ENCODE measurements at regions of chr5 and their contacts with region 1.

Region 1: DNA sequence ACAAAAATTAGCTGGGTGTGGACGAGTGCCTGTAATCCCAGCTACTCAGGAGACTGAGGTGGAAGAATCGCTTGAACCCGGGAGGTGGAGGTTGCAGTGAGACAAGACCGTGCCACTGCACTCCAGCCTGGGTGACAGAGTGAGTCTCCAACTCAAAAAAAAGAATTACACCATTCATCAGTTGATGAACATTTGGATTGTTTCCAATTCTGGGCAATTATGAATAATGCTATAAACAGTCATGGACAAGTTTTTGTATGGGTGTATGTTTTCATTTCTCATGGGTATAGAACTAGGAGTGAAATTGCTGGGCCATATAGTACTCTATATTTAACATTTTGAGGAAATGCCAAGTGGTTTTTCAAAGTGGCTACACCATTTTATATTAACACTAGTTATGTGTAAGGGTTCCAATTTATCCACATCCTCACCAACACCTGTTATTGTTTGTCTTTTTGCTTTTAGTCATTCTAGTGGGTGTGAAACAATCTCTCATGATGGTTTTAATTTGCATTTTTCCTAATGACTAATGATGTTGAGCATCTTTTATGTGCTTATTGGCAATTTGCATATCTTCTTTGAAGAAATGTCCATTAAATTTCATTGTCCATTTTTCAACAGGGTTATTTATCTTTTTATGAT is 9.0 kb upstream of the CCDC125 start:
- DNase-seq: no peak
- ATAC-seq: no peak
- H3K4me3 ChIP-seq: no peak overlapping the region
- H3K4me3 Mint-ChIP-seq: no peak overlapping the region
- H3K27ac ChIP-seq: no peak overlapping the region
- H3K27ac Mint-ChIP-seq: no peak overlapping the region
- H3K4me1 ChIP-seq: no peaks in the 10 kb centered on the region
- H3K4me1 Mint-ChIP-seq: no peaks in the 10 kb centered on the region
- H3K27me3 ChIP-seq: no peaks in the 10 kb centered on the region
- H3K27me3 Mint-ChIP-seq: no peaks in the 10 kb centered on the region

Region 2: GRCh38 chr5:69360442-69360841 is 18.8 kb after region 1 on chr5:
- CTCF ChIA-PET with region 1: no interaction called
- POLR2A ChIA-PET with region 1: interaction called in 1 of 2 experiments, 11 read pairs
- DNase-seq: no peak
- ATAC-seq: no peak
- H3K4me3 ChIP-seq: no peak overlapping the region
- H3K4me3 Mint-ChIP-seq: no peak overlapping the region
- H3K27ac ChIP-seq: no peak overlapping the region
- H3K27ac Mint-ChIP-seq: peak overlapping the region in 1 of 2 donors; percentile 1
- H3K4me1 ChIP-seq: peaks cover 0 to 2% of the 10 kb centered on the region in 2 experiments
- H3K4me1 Mint-ChIP-seq: peaks cover 15 to 25% (median 22%) of the 10 kb centered on the region in 3 donors
- H3K27me3 ChIP-seq: no peaks in the 10 kb centered on the region
- H3K27me3 Mint-ChIP-seq: no peaks in the 10 kb centered on the region

Region 3: GRCh38 chr5:69492391-69492922 is 150.8 kb after region 1 on chr5 and contains the start of gene OCLN:
- CTCF ChIA-PET with region 1: no interaction called
- POLR2A ChIA-PET with region 1: interaction called in 1 of 2 experiments, 10 read pairs
- DNase-seq: peak in 1 of 35 experiments; percentile 3
- ATAC-seq: peak in 3 of 4 experiments; percentile 24 to 38 (median 29)
- H3K4me3 ChIP-seq: peak within 1 kb of the TSS; percentile 26 to 68
- H3K4me3 Mint-ChIP-seq: peak within 1 kb of the TSS; percentile 56 to 74 (median 66)
- H3K27ac ChIP-seq: no peak within 1 kb of the TSS
- H3K27ac Mint-ChIP-seq: no peak within 1 kb of the TSS
- H3K4me1 ChIP-seq: peaks cover 0 to 18% of the 10 kb centered on the region in 2 experiments
- H3K4me1 Mint-ChIP-seq: peaks cover 0 to 17% (median 15%) of the 10 kb centered on the region in 3 donors
- H3K27me3 ChIP-seq: peaks cover 2 to 35% of the 10 kb centered on the region in 2 experiments
- H3K27me3 Mint-ChIP-seq: peaks cover 49 to 58% of the 10 kb centered on the region in 2 donors
- total RNA-seq, gene OCLN: 1.1 to 9.0 (median 4.2) TPM

Measured in T-cell (primary cell).